Activated T-helper 1 cell treated with anti-CD3 and anti-CD28 coated beads, Interleukin-12 subunit alpha, Interleukin-12 subunit beta, Interleukin-2, Interleukin-4 antibody, amounts not matched to agents 30 ng/mL and 10 ng/mL and 1 ng/mL, durations not matched to agents 14 hours and 24 hours and 36 hours (primary cell): ENCODE measurements at regions of chr1 and their contacts with region 1.

Region 1: DNA sequence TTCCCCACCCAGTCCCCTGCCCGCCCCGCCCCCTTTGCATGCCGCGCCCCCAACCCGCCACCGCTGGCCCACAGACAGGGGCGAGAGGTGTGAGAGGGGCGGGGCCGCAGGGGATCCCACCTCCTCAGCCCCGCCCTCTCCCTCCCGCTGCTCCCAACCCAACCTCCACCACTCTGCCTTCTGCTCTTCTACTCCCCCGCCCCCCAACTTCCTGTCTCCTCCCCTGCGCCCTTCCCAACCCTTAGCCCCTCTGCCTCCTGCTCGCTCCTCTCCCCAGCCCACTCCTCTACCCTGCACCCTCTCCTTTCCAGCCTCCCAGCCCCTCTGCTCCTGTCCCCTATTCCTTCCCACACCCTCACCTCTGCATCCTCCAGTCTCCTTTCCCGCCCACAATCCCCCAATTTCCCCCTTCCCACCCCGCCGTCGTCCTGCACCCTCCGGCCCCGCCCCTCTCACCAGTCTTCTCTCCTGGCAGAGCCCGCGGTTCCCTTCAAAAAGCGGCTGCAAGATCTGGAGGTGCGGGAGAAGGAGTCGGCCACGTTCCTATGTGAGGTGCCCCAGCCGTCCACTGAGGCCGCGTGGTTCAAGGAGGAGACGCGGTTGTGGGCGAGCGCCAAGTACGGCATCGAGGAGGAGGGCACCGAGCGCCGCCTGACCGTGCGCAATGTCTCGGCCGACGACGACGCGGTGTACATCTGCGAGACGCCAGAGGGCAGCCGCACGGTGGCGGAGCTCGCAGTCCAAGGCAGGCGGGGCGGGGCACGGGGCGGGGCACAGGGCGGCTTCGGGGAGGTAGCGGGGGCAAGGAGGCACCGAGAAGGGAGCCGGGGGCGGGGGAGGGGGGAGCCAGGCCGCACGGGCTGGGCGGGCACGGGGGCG is 5.4 kb downstream of the OBSCN start:
- DNase-seq: peak; percentile 80
- H3K4me3 Mint-ChIP-seq: peak overlapping the region; percentile 89
- H3K27ac Mint-ChIP-seq: peak overlapping the region; percentile 93
- H3K4me1 Mint-ChIP-seq: no peaks in the 10 kb centered on the region
- H3K27me3 Mint-ChIP-seq: peaks cover 4% of the 10 kb centered on the region

Region 2: DNA sequence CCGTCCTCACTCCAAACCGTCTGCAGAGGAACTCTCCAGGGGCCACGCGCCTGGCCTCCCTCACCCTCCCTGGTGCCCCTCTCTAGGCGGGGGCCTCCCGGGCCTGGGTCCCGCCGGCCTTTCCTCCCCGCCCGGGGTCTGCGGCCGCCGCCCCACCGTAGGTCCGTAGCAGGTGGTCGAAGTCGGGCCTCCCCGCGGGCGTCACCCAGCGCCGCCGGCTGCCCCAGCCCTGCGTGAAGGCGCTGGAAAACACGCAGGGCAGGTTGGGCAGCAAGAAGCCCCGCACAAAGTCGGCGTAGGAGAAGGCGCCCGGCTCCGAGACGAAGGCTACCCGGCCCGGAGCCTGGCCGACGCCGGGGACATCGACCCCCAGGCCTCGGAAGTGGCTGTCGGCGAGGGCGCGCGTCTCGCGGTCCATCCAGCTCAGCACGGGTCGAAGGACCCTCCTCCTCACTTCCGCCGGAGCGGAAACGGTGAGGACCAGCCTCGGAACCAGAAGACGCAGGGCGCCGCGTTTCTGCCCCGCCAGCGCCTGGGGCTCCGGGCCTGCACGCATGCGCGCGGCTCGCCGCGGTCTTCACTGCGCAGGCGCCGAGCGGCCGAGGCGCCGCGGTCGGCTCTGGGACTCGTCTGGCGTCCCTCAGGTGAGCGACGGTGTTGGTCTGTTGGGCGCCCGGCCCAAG is 478.2 kb before region 1 on chr1 and contains the starts of genes JMJD4 and SNAP47:
- intact Hi-C with region 1: loop called (anchors 1 kb)
- DNase-seq: peak; percentile 93
- H3K4me3 Mint-ChIP-seq: peak within 1 kb of the TSS; percentile 98
- H3K27ac Mint-ChIP-seq: peak within 1 kb of the TSS; percentile 97
- H3K4me1 Mint-ChIP-seq: peaks cover 25% of the 10 kb centered on the region
- H3K27me3 Mint-ChIP-seq: no peaks in the 10 kb centered on the region
- total RNA-seq, gene JMJD4: 33.9 and 37.5 TPM in 2 replicates
- total RNA-seq, gene SNAP47: 32.2 and 33.7 TPM in 2 replicates

Region 3: GRCh38 chr1:228060458-228061190 is 152.6 kb before region 1 on chr1:
- intact Hi-C with region 1: no loop called
- DNase-seq: no peak
- H3K4me3 Mint-ChIP-seq: peak overlapping the region; percentile 26
- H3K27ac Mint-ChIP-seq: no peak overlapping the region
- H3K4me1 Mint-ChIP-seq: no peaks in the 10 kb centered on the region
- H3K27me3 Mint-ChIP-seq: peaks cover 42% of the 10 kb centered on the region

Region 4: GRCh38 chr1:228109073-228109961 is 103.9 kb before region 1 on chr1 and contains the start of gene MRPL55:
- intact Hi-C with region 1: loop called (anchors 1 kb)
- DNase-seq: peak; percentile 99
- H3K4me3 Mint-ChIP-seq: peak within 1 kb of the TSS; percentile 87
- H3K27ac Mint-ChIP-seq: peak within 1 kb of the TSS; percentile 89
- H3K4me1 Mint-ChIP-seq: peaks cover 28% of the 10 kb centered on the region
- H3K27me3 Mint-ChIP-seq: peaks cover 3% of the 10 kb centered on the region
- total RNA-seq, gene MRPL55: 53.3 and 61.7 TPM in 2 replicates

Region 5: GRCh38 chr1:228174482-228175375 is 38.5 kb before region 1 on chr1:
- intact Hi-C with region 1: loop called (anchors 2 kb)
- DNase-seq: no peak
- H3K4me3 Mint-ChIP-seq: no peak overlapping the region
- H3K27ac Mint-ChIP-seq: no peak overlapping the region
- H3K4me1 Mint-ChIP-seq: no peaks in the 10 kb centered on the region
- H3K27me3 Mint-ChIP-seq: peaks cover 2% of the 10 kb centered on the region

Region 6: DNA sequence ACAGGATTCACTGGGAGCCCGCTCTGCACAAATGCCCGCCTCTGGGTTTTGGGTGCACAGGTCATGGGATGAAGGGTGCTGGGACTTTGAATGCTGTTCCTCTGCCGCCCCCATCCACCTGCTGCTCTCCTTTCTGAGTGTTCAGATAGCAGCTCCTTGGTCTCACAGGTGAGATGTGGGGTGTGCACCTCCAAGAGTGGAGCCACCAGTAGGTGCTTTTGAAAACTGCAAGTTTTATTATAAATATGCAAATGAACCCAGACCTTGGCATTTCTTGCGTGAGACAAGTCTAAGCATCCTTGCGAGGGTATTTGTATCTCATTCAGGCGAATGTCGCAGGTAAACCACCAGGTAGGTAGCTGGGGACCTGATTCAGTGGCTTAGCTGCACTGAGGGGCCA is 24.8 kb after region 1 on chr1:
- intact Hi-C with region 1: no loop called
- DNase-seq: no peak
- H3K4me3 Mint-ChIP-seq: no peak overlapping the region
- H3K27ac Mint-ChIP-seq: no peak overlapping the region
- H3K4me1 Mint-ChIP-seq: no peaks in the 10 kb centered on the region
- H3K27me3 Mint-ChIP-seq: no peaks in the 10 kb centered on the region

Region 7: GRCh38 chr1:228457396-228458176 is 244.4 kb after region 1 on chr1:
- intact Hi-C with region 1: loop called (anchors 1 kb)
- DNase-seq: peak; percentile 89
- H3K4me3 Mint-ChIP-seq: peak overlapping the region; percentile 99
- H3K27ac Mint-ChIP-seq: peak overlapping the region; percentile 100
- H3K4me1 Mint-ChIP-seq: peaks cover 59% of the 10 kb centered on the region
- H3K27me3 Mint-ChIP-seq: peaks cover 2% of the 10 kb centered on the region

Region 8: DNA sequence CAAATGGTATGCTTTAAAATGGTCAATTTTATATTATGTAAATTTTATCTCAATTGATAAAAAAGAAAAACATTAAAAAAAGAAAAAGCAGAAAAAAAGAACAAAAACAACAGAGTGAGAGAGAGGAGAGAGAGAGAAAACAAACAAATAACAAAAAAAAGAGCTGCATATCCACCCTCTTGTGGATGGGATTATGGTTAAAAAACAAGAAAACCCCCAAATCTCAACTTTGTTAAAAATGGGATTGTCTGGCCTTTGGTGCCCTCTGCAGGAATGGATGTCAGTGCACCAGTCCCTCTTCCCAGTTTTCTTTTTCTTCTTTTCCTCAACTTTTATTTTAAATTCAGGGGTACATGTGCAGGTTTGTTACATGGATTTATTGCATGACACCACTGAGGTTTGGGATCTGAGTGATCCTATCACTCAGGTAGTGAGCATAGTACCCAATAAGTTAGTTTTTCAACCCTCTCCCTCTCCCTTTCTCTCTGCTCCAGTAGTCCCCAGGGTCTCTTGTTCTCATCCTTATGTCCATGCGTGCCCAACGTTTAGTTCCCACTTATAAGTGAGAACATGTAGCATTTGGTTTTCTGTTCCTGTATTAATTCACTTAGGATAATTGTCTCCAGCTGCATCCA is 302.1 kb after region 1 on chr1:
- intact Hi-C with region 1: loop called (anchors 1 kb)
- DNase-seq: no peak
- H3K4me3 Mint-ChIP-seq: no peak overlapping the region
- H3K27ac Mint-ChIP-seq: no peak overlapping the region
- H3K4me1 Mint-ChIP-seq: peaks cover 6% of the 10 kb centered on the region
- H3K27me3 Mint-ChIP-seq: peaks cover 19% of the 10 kb centered on the region